B cell (primary cell): ENCODE measurements at regions of chr9 and their contacts with region 1.

Region 1: DNA sequence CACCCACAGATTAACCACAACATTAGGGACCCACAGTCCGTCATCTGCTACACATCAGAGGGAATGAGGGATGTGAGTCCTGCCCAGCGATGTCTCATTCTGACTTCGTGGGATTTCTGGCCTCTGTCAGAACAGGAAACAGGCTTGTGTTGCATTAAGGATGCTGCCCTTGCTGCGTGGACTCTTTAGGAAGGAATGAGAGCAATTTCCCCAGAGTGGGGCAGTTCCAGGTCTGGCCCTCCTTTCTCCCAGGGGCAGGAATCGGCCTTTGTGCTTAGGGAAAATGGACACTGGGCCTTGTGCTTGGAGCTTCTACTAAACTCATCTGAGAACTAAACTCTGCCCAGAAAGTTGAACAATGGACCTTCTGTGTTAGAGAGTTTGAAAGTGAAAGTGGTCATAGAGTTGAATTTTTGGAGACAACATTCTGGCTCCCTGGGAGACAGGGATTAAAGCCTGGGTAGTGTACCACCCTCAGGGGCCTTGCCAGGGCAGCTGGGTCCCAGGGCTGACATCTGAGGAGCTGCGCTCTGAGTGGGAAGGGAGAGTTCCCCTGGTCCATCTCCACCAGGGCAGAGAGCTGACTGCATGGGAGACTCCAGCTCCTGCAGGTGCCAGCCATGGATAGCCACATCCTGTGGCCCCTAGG is 37.8 kb upstream of the S1PR3 start:
- DNase-seq: no peak
- ATAC-seq: no peak
- H3K4me3 ChIP-seq: no peak overlapping the region
- H3K4me3 Mint-ChIP-seq: no peak overlapping the region
- H3K27ac ChIP-seq: no peak overlapping the region
- H3K27ac Mint-ChIP-seq: no peak overlapping the region
- H3K4me1 ChIP-seq: no peaks in the 10 kb centered on the region
- H3K4me1 Mint-ChIP-seq: no peaks in the 10 kb centered on the region
- H3K27me3 ChIP-seq: peaks cover 0 to 24% (median 6%) of the 10 kb centered on the region in 4 experiments
- H3K27me3 Mint-ChIP-seq: peaks cover 39% of the 10 kb centered on the region
- CTCF ChIP-seq: no peak

Region 2: GRCh38 chr9:89023740-89024139 is 70.2 kb after region 1 on chr9:
- CTCF ChIA-PET with region 1: no interaction called
- POLR2A ChIA-PET with region 1: no interaction called
- intact Hi-C with region 1: loop called (anchors 2 kb)
- DNase-seq: no peak
- ATAC-seq: no peak
- H3K4me3 ChIP-seq: no peak overlapping the region
- H3K4me3 Mint-ChIP-seq: no peak overlapping the region
- H3K27ac ChIP-seq: no peak overlapping the region
- H3K27ac Mint-ChIP-seq: no peak overlapping the region
- H3K4me1 ChIP-seq: no peaks in the 10 kb centered on the region
- H3K4me1 Mint-ChIP-seq: no peaks in the 10 kb centered on the region
- H3K27me3 ChIP-seq: no peaks in the 10 kb centered on the region
- H3K27me3 Mint-ChIP-seq: peaks cover 7% of the 10 kb centered on the region
- CTCF ChIP-seq: no peak

Region 3: GRCh38 chr9:89483592-89484522 is 530.4 kb after region 1 on chr9:
- CTCF ChIA-PET with region 1: no interaction called
- POLR2A ChIA-PET with region 1: no interaction called
- intact Hi-C with region 1: no loop called
- DNase-seq: peak; percentile 73
- ATAC-seq: peak; percentile 76
- H3K4me3 ChIP-seq: peak overlapping the region; percentile 39 to 86 (median 58)
- H3K4me3 Mint-ChIP-seq: peak overlapping the region; percentile 91
- H3K27ac ChIP-seq: peak overlapping the region; percentile 48 to 84
- H3K27ac Mint-ChIP-seq: peak overlapping the region; percentile 93
- H3K4me1 ChIP-seq: peaks cover 47 to 50% of the 10 kb centered on the region in 2 donors
- H3K4me1 Mint-ChIP-seq: peaks cover 81% of the 10 kb centered on the region
- H3K27me3 ChIP-seq: no peaks in the 10 kb centered on the region
- H3K27me3 Mint-ChIP-seq: no peaks in the 10 kb centered on the region
- CTCF ChIP-seq: no peak